ENCODE measurements at regions of chr16 and their contacts with region 1.

Region 1: DNA sequence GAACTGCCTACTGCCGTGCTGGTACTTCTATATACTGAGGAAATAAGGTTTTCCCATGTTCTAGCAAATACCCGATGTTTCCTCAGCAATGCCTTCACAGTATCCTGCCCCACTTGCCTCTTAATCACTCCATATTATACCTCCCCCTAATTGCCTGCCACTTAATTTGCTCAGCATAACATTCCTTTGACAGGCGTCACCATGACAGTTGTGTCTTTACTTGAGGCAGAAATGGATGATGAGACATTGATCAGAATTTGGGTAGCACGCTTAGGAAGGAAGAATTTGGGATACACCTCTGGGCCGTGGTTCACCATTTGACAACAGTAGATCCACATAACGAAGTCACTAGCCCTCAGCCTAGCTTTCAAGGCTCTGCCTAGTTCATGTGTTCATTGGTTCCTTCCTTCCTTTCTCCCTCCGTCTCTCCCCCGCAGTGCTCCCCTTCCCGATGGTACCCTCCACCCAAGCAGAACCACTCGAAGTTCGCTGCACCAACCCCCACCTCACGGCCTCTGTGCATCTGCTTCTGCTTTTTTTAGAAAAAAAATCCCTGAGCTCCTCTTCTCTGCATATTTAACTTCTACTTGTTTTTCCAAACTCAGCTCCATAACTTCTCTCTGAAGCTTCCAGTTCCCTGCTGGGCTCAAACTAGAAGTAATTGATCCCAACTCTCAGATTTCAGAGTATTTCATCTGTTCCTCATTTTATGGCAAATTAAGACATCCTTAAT is 19.4 kb downstream of the IQCK start:
- DNase-seq: no peak
- H3K4me3 ChIP-seq: no peak overlapping the region
- H3K27ac ChIP-seq: no peak overlapping the region
- H3K4me1 ChIP-seq: no peaks in the 10 kb centered on the region
- H3K27me3 ChIP-seq: no peaks in the 10 kb centered on the region
- CTCF ChIP-seq: no peak

Region 2: DNA sequence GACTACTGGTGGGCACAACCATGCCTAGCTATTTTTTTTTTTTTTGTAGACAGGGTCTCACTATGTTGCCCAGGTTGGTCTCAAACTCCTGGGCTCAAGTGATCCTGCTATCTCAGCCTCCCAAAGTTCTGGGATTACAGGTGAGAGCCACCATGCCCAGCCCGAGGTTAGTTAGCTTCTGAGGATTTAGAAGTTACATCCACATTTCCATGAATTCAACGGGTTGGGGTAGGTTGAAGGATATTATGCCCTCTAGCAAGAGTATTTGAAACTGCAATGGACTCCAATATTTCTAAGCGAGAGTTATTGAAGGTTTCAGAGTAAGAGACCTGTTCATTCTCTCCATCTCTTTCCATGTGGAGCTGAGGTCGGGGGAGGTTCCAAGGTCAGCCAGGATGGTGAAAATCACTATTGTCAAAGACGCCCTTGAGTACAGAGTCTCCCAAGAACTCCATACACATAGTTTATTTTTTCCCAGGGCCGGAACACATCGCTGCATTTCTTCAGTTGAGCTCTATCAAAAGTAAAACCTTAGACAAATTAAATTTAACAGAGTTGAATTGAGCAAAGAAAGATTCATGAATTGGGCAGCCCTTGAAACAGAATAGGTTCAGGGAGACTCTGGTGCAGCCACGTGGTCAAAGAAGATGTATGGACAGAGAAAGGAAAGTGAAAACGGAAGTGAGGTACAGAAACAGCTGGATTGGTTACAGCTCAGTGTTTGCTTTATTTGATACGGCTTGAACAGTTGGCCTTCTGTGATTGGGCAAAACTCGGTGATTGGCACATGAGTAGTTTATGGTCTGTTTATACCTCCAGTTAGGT is 642.7 kb before region 1 on chr16:
- CTCF ChIA-PET with region 1: no interaction called
- POLR2A ChIA-PET with region 1: interaction called, 11 read pairs
- intact Hi-C with region 1: no loop called
- DNase-seq: no peak
- H3K4me3 ChIP-seq: no peak overlapping the region
- H3K27ac ChIP-seq: peak overlapping the region; percentile 99
- H3K4me1 ChIP-seq: peaks cover 46% of the 10 kb centered on the region
- H3K27me3 ChIP-seq: no peaks in the 10 kb centered on the region
- CTCF ChIP-seq: no peak

Region 3: GRCh38 chr16:19860166-19861041 is 122.9 kb after region 1 on chr16:
- CTCF ChIA-PET with region 1: no interaction called
- POLR2A ChIA-PET with region 1: interaction called, 14 read pairs
- intact Hi-C with region 1: no loop called
- DNase-seq: no peak
- H3K4me3 ChIP-seq: no peak overlapping the region
- H3K27ac ChIP-seq: no peak overlapping the region
- H3K4me1 ChIP-seq: no peaks in the 10 kb centered on the region
- H3K27me3 ChIP-seq: no peaks in the 10 kb centered on the region
- CTCF ChIP-seq: no peak